Left colon (tissue), 2 donors: ENCODE measurements at regions of chr1 and their contacts with region 1.

Region 1: GRCh38 chr1:11907275-11908094 is 18.7 kb downstream of the KIAA2013 start:
- DNase-seq: peak; percentile 92 to 93
- ATAC-seq: peak; percentile 74

Region 2: DNA sequence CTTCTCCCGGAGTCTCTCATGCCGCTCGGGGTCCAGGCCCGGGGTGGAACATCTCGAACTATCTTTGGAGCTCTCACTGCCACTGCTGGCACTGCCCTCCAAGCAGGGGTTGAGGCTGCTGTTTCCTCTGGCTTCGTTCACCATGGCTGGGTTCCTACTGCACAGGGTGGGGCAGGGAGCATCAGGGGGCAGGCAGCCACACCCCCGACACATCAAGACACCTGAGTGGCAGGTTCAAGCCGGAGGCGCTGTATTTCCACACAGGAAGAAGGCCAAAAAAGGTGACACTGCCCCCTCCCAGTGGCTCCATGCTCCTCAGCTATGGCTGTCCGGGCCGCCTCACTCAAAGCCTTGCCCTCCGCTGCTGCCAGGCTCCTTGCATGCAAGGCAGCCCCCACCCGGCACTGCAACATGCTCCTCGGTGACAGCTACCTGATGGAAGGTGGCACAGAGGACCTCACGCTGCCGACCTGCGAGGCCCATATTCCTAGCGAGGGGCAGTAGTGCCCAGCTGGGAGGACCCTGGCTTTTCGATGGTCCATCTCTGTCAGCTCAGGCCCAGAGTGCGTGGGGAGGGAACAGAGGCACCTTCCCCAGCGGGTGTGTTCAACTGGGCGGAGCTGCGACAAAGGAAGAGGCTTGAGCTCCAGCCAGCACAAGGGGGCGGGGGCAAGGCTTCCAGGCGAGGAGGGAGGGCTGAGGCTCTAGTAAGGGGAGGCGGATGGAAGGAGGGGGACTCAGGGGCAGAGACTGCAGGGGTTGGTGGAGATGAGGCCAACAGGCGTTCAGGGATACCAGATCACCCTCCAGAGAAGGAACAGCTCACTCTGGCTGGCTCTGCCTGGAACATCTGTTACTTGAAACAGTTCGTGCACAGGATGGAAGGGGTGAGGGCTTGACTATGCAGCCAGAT is 104.3 kb before region 1 on chr1:
- intact Hi-C with region 1: no loop called
- DNase-seq: peak; percentile 92 to 96
- ATAC-seq: peak; percentile 46

Region 3: DNA sequence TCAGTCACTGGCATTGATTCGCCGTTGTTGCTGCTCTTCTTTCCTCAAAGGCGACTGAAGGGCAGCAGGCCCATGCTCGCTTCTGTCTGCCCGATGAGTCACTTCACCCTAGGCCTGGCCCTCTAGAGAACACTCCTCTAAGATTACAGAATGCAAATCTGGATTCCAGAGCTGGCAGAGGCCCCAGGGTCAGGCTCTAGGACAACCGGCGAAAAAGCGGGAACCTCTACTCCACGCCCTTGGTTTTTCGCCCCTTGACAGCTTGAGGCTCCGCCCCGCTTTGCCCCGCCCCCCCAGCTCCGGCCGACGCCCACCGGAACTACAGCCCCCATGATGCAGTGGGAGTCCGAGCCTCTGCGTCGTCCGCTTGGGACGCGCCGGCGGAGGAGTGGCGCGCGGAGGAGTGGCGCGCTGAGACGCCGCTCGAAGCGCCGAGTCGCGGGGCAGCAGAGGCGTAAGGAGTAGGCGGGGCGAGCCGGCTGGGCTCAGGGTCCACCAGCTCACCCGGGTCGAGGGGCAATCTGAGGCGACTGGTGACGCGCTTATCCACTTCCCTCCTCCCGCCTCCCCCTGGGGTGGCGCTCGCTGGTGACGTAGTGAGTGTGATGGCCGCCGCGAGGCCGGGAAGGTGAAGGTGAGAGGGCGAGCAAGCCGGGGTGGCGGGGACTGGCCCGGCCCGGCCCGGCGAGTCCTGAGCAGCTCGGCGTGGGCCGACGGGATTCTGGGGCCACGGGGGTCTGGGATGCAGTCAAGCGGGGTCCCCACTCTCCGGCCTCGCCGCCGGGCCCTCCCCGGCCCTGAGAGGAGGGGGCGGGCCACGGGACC is 72.6 kb after region 1 on chr1 and contains the start of gene MFN2:
- intact Hi-C with region 1: loop called in 1 of 2 experiments (anchors 10 kb)
- DNase-seq: peak; percentile 97 to 98
- ATAC-seq: peak; percentile 88
- total RNA-seq, gene MFN2: 93.9 to 99.6 TPM